T-cell (primary cell): ENCODE measurements at regions of chr3 and their contacts with region 1.

Region 1: GRCh38 chr3:186930641-186931531 is 560 bp downstream of the ST6GAL1 start:
- DNase-seq: peak; percentile 43 to 82 (median 61)
- ATAC-seq: peak; percentile 74 to 82 (median 75)
- H3K4me3 ChIP-seq: peak overlapping the region; percentile 81 to 98
- H3K4me3 Mint-ChIP-seq: peak overlapping the region; percentile 92 to 99 (median 99)
- H3K27ac ChIP-seq: peak overlapping the region; percentile 80
- H3K27ac Mint-ChIP-seq: peak overlapping the region; percentile 97 to 98
- H3K4me1 ChIP-seq: peaks cover 7 to 32% of the 10 kb centered on the region in 2 experiments
- H3K4me1 Mint-ChIP-seq: peaks cover 40 to 45% (median 40%) of the 10 kb centered on the region in 3 donors
- H3K27me3 ChIP-seq: no peaks in the 10 kb centered on the region
- H3K27me3 Mint-ChIP-seq: no peaks in the 10 kb centered on the region

Region 2: DNA sequence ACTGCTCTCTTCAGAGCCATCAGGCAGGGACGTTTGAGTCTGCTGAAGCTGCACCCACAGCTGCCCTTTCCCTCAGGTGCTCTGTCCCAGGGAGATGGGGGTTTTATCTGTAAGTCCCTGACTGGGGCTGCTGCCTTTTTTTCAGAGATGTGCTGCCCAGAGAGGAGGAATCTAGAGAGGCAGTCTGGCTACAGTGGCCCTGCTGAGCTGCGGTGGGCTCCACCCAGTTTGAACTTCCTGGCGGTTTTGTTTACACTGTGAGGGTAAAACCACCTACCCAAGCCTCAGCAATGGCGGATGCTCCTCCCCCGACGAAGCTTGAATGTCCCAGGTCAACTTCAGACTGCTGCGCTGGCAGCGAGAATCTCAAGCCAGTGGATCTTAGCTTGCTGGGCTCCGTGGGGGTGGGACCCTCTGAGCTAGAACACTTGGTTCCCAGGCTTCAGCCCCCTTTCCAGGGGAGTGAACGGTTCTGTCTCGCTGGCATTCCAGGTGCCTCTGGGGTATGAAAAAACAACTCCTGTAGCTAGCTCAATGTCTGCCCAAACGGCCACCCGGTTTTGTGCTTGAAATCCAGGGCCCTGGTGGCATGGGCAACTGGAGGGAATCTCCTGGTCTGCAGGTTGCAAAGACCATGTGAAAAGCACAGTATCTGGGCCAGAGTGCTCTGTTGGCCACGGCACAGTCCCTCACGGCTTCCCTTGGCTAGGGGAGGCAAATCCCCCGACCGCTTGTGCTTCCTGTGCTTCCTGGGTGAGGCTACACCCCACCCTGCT is 21.6 kb before region 1 on chr3:
- CTCF ChIA-PET with region 1: interaction called in 1 of 2 experiments, 17 read pairs
- POLR2A ChIA-PET with region 1: no interaction called
- DNase-seq: peak; percentile 70 to 88 (median 83)
- ATAC-seq: peak; percentile 94 to 98 (median 96)
- H3K4me3 ChIP-seq: peak overlapping the region; percentile 35
- H3K4me3 Mint-ChIP-seq: peak overlapping the region; percentile 60 to 77 (median 61)
- H3K27ac ChIP-seq: peak overlapping the region; percentile 86
- H3K27ac Mint-ChIP-seq: peak overlapping the region; percentile 96
- H3K4me1 ChIP-seq: peaks cover 7 to 25% of the 10 kb centered on the region in 2 experiments
- H3K4me1 Mint-ChIP-seq: peaks cover 36 to 53% (median 39%) of the 10 kb centered on the region in 3 donors
- H3K27me3 ChIP-seq: no peaks in the 10 kb centered on the region
- H3K27me3 Mint-ChIP-seq: no peaks in the 10 kb centered on the region

Region 3: DNA sequence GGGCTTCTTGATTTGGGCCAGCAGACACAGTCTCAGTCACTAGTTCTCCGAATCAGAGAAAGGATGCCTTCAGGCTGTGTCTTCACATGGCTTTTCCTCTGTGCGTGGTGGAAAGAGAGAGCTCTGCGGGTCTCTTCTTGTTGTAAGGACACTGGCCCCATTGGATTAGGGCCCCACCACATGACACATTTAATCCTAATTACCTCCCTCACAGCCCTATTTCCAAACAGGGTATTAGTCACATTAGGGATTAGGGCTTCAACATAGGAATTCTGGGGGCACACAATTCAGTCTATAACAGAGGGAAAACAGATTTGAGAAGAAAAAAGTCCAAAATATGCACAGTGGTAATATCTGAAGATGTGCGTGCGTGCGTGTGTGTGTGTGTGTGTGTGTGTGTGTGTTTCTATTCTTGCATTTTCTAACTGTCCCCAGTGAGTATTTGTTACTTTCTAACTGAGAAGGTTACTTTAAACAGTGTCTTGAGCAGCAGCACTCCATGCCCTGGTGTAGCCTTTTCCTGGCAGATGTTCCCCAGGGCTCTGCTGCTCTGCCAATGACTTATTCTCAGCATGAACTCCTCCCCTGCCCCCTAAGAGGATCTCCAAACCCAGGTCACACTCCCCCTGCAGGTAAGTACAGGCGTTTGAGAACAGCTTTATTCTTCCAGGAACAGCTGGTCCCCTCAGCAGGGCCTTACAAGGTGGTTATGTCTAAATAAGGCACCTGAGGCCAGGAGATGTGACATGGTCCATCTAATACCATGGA is 135.5 kb after region 1 on chr3:
- CTCF ChIA-PET with region 1: interaction called in 1 of 2 experiments, 12 read pairs
- POLR2A ChIA-PET with region 1: no interaction called
- DNase-seq: peak in 34 of 35 experiments; percentile 15 to 75 (median 52)
- ATAC-seq: peak; percentile 66 to 79 (median 68)
- H3K4me3 ChIP-seq: no peak overlapping the region
- H3K4me3 Mint-ChIP-seq: peak overlapping the region in 1 of 3 donors; percentile 31
- H3K27ac ChIP-seq: peak overlapping the region; percentile 47
- H3K27ac Mint-ChIP-seq: peak overlapping the region; percentile 63 to 87
- H3K4me1 ChIP-seq: peaks cover 10 to 38% of the 10 kb centered on the region in 2 experiments
- H3K4me1 Mint-ChIP-seq: peaks cover 67 to 82% (median 79%) of the 10 kb centered on the region in 3 donors
- H3K27me3 ChIP-seq: no peaks in the 10 kb centered on the region
- H3K27me3 Mint-ChIP-seq: no peaks in the 10 kb centered on the region